Activated CD4-positive, alpha-beta memory T cell treated with anti-CD3 and anti-CD28 coated beads for 36 hours (primary cell): ENCODE measurements at regions of chr1 and their contacts with region 1.

Region 1: GRCh38 chr1:114346480-114347029 is 164.4 kb downstream of the TRIM33 start:
- DNase-seq: peak; percentile 98
- H3K4me3 Mint-ChIP-seq: peak overlapping the region; percentile 82
- H3K27ac Mint-ChIP-seq: peak overlapping the region; percentile 84
- H3K4me1 Mint-ChIP-seq: peaks cover 26% of the 10 kb centered on the region
- H3K27me3 Mint-ChIP-seq: no peaks in the 10 kb centered on the region

Region 2: GRCh38 chr1:113978863-113979702 is 367.5 kb before region 1 on chr1 and contains the start of gene OLFML3:
- CTCF ChIA-PET with region 1: interaction called, 4 read pairs
- POLR2A ChIA-PET with region 1: no interaction called
- intact Hi-C with region 1: loop called (anchors 5 kb)
- DNase-seq: peak; percentile 67
- H3K4me3 Mint-ChIP-seq: no peak within 1 kb of the TSS
- H3K27ac Mint-ChIP-seq: no peak within 1 kb of the TSS
- H3K4me1 Mint-ChIP-seq: peaks cover 33% of the 10 kb centered on the region
- H3K27me3 Mint-ChIP-seq: no peaks in the 10 kb centered on the region
- total RNA-seq, gene OLFML3: 0.21 TPM in 1 of 2 experiments, not detected in the other

Region 3: GRCh38 chr1:114389714-114390113 is 43.2 kb after region 1 on chr1:
- CTCF ChIA-PET with region 1: interaction called, 3 read pairs
- POLR2A ChIA-PET with region 1: no interaction called
- intact Hi-C with region 1: loop called (anchors 5 kb)
- DNase-seq: no peak
- H3K4me3 Mint-ChIP-seq: no peak overlapping the region
- H3K27ac Mint-ChIP-seq: no peak overlapping the region
- H3K4me1 Mint-ChIP-seq: peaks cover 12% of the 10 kb centered on the region
- H3K27me3 Mint-ChIP-seq: no peaks in the 10 kb centered on the region

Region 4: DNA sequence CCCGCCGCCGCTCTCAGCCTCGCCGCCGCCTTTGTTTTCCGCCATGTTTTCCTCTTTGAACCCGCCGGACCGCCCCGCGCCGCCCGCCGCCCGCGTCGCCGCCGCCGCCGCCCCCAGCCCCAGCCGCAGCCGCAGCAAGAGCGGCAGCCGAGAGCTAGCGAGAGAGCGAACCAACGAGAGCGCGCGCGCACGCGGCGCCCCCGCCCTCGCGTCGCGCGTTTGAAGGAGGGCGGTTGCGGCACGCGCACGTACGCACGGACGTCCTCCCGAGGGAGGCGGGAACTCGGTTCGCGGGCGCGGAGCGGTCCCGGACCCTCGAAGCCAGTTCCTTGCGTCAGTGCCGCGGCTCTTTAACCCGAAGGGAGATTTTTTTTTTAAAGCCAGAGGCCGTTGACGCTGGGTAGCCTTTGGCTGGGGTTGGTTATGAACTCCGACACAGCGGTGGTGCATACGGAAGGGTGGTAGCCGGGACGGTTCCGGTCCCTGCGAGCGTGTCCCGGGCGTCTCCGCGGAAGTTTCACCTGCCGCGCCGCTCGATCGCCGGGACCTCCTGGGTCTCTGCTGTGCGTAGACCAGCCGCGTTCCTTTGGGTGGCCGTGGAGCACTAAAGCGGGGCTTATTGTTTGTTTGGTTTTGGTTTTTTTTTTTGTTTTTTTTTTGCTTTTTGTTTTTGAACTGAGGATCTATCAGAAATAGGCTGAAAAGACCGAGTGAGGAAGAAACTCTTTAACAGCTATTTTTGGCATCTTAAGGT is 164.7 kb after region 1 on chr1 and contains the start of gene TRIM33:
- CTCF ChIA-PET with region 1: interaction called, 10 read pairs
- POLR2A ChIA-PET with region 1: no interaction called
- intact Hi-C with region 1: loop called (anchors 2 kb)
- DNase-seq: peak; percentile 95
- H3K4me3 Mint-ChIP-seq: peak within 1 kb of the TSS; percentile 91
- H3K27ac Mint-ChIP-seq: peak within 1 kb of the TSS; percentile 98
- H3K4me1 Mint-ChIP-seq: peaks cover 41% of the 10 kb centered on the region
- H3K27me3 Mint-ChIP-seq: no peaks in the 10 kb centered on the region
- total RNA-seq, gene TRIM33: 26.9 to 27.9 TPM

Region 5: DNA sequence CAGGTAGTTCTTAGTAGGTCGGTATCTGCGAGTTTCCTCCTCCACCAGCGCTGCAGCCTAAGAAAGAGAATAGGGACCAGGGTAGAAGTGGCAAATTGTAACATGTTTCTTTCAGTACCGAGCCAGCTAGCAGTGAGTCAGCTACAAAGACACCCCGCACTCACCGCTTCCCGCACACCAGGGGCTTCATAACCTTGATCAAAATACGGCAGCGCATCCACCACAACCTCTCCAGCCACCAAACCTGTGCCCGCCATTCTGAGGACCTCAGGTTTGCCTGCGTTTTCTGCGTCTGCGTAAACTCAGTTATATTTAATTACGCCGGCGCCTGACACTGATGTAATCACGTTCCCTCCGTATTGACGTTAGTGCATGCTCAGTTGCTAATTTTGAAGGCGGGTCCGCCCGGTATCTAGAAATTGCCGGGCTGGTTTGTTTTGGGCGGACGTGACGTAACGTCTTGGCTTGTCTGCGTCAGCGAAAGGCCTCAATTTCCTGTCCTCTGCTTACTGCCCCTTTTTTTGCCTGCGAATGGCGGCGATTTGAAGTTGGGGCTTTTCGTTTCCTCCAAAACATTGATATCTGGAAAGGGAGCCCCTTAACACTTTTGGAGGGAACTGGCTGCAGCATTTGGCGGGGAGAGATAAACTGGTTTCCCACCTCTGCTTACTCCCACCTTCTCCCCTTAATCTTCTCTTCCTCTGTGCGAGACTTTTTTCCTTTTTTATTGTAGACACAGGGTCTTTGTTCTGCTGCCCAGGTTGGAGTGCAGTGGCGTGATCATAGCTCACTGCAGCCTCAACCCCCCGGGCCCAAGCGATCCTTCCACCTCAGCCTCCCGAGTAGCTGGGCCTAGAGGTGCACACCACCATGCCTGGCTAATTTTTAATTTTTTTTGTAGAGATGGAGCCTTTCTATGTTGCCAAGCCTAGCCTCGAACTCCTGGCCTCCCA is 235.1 kb after region 1 on chr1 and contains the start of gene BCAS2:
- CTCF ChIA-PET with region 1: interaction called, 10 read pairs
- POLR2A ChIA-PET with region 1: interaction called, 3 read pairs
- intact Hi-C with region 1: loop called (anchors 2 kb)
- DNase-seq: peak; percentile 98
- H3K4me3 Mint-ChIP-seq: peak within 1 kb of the TSS; percentile 85
- H3K27ac Mint-ChIP-seq: peak within 1 kb of the TSS; percentile 83
- H3K4me1 Mint-ChIP-seq: peaks cover 29% of the 10 kb centered on the region
- H3K27me3 Mint-ChIP-seq: no peaks in the 10 kb centered on the region
- total RNA-seq, gene BCAS2: 48.5 to 49.0 TPM

Region 6: GRCh38 chr1:114716304-114717170 is 370.0 kb after region 1 on chr1 and contains the start of gene NRAS:
- CTCF ChIA-PET with region 1: interaction called, 8 read pairs
- POLR2A ChIA-PET with region 1: no interaction called
- intact Hi-C with region 1: loop called (anchors 1 kb)
- DNase-seq: peak; percentile 97
- H3K4me3 Mint-ChIP-seq: peak within 1 kb of the TSS; percentile 91
- H3K27ac Mint-ChIP-seq: peak within 1 kb of the TSS; percentile 97
- H3K4me1 Mint-ChIP-seq: peaks cover 31% of the 10 kb centered on the region
- H3K27me3 Mint-ChIP-seq: no peaks in the 10 kb centered on the region
- total RNA-seq, gene NRAS: 51.7 to 52.1 TPM

Region 7: DNA sequence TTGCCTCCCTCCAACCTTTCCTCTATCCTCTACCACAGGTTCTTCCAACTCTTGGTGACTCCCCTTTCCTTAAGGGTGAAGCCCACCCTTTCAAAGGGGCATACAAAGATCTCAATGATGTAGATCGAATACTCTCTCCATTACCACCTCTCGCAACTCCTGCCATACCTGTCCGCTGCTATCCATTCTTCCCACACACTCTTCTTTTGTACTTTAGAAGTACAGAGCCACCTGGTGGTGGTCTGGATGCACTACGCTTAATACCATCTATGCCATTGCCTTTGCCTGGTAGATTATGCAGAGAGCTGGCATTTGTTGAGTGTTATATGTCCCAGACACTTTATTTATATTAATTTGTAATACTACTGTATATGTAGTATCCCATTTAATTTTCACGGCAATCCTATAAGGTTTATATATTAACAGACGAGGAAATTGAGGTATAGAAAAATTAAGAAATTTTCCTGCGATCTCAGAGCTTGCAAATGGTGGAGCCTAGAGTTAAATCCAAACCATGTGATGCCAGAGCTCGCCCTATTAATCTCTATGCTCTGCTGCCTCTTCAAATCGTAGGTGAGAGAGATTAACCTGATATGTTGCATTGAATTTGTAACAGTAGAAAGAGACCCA is 706.0 kb after region 1 on chr1:
- CTCF ChIA-PET with region 1: no interaction called
- POLR2A ChIA-PET with region 1: no interaction called
- intact Hi-C with region 1: loop called (anchors 1 kb)
- DNase-seq: peak; percentile 67
- H3K4me3 Mint-ChIP-seq: no peak overlapping the region
- H3K27ac Mint-ChIP-seq: no peak overlapping the region
- H3K4me1 Mint-ChIP-seq: peaks cover 3% of the 10 kb centered on the region
- H3K27me3 Mint-ChIP-seq: no peaks in the 10 kb centered on the region